ENCODE measurements at regions of chr5 and their contacts with region 1.

Region 1: DNA sequence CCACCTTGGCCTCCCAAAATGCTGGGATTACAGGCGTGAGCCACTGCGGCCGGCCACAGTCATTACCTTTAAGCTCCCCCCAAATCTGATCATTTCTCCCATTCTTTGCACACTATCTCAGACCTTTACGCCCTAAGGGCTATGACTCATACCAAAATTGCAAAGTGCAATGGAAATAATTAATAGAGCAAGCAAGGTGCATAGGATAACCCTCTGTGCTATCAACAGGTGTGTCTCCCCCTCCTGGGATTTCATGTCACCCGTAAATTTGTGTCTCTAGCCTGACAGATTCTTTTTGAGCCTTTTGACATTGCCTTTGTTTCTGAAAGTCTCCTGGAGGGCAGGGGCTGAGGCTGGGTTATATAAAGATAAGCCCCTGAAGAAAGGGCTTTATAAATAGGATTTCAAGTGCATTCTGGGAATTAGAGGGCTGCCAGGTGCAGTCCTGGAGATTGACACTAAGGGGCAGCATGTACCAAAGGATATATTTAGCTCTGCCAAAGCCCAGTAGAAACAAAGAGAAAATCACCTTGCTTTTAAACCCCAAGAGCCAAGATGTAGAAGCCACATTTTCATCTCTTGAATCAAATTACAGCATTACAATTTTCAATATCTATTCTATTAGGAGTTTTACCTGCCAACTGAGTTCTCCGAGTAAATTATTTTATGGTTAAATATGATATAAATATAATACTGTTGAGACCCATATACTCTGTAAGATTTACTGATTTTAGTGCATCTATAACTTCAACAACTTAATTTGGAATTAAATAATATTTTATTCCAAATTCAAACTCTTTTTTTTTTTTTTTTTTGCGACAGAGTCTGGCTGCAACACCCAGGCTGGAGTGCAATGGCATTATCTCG is 18.2 kb downstream of the S100Z start:
- DNase-seq: peak; percentile 16
- H3K4me3 ChIP-seq: no peak overlapping the region
- CTCF ChIP-seq: peak; percentile 63

Region 2: GRCh38 chr5:76831110-76831452 is 37.0 kb before region 1 on chr5:
- CTCF ChIA-PET with region 1: no interaction called
- POLR2A ChIA-PET with region 1: no interaction called
- DNase-seq: peak; percentile 37
- H3K4me3 ChIP-seq: no peak overlapping the region
- CTCF ChIP-seq: no peak

Region 3: DNA sequence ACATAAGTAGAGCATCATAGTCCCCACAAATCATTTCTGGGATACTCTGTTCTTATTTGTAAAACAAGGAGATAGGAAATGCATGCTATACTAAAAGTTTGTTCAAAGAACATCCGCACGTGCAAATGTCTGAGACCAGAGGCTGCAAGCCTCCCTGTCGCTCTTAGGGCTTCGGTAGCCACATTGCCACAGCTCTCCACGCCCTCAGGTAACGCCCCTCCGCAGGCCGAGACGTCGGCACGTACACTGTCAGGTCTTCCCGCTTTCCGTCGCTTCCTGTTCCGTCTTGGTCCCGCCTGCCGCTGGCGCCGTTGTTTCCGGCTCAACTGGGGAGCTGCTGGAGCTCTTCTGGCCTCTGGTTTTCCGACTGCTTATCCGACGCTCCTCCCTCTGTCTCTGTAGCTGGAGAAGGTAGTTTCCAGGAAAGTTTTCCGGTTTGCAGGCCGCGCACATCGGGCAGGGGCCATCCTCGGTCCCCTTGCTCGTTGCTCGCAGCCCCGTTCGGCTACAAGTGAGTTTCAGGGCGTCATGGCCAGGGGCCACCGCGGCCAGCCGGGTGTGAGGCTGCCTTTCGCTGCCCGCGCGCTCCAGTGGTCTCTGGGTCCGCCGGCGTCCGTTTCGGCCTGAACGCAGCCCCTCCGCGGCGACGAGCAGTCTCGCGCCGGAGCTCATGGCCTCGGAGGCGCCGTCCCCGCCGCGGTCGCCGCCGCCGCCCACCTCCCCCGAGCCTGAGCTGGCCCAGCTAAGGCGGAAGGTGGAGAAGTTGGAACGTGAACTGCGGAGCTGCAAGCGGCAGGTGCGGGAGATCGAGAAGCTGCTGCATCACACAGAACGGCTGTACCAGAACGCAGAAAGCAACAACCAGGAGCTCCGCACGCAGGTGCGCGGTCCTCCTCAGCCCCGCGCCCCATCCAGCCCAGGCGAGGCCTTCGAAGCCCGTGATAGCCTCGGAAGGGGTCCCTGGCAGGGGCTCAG is 162.3 kb after region 1 on chr5 and contains the start of gene AGGF1:
- CTCF ChIA-PET with region 1: interaction called, 14 read pairs
- POLR2A ChIA-PET with region 1: no interaction called
- DNase-seq: peak; percentile 57
- H3K4me3 ChIP-seq: peak within 1 kb of the TSS; percentile 90
- CTCF ChIP-seq: no peak

Measured in AG04449 (cell line).